ENCODE measurements at regions of chr20 and their contacts with region 1.

Region 1: GRCh38 chr20:35277531-35278395 is at the start of gene MMP24OS:
- DNase-seq: peak; percentile 89 to 93
- ATAC-seq: peak; percentile 91 to 97 (median 96)
- H3K4me3 ChIP-seq: peak within 1 kb of the TSS; percentile 56 to 89 (median 80)
- H3K27ac ChIP-seq: peak within 1 kb of the TSS; percentile 96 to 99 (median 98)
- H3K4me1 ChIP-seq: peaks cover 3 to 41% (median 16%) of the 10 kb centered on the region in 9 donors
- H3K27me3 ChIP-seq: no peaks in the 10 kb centered on the region
- CTCF ChIP-seq: peak in 5 of 9 donors; percentile 20 to 49 (median 40)
- total RNA-seq, gene MMP24OS: 36.8 to 62.4 (median 46.1) TPM

Region 2: DNA sequence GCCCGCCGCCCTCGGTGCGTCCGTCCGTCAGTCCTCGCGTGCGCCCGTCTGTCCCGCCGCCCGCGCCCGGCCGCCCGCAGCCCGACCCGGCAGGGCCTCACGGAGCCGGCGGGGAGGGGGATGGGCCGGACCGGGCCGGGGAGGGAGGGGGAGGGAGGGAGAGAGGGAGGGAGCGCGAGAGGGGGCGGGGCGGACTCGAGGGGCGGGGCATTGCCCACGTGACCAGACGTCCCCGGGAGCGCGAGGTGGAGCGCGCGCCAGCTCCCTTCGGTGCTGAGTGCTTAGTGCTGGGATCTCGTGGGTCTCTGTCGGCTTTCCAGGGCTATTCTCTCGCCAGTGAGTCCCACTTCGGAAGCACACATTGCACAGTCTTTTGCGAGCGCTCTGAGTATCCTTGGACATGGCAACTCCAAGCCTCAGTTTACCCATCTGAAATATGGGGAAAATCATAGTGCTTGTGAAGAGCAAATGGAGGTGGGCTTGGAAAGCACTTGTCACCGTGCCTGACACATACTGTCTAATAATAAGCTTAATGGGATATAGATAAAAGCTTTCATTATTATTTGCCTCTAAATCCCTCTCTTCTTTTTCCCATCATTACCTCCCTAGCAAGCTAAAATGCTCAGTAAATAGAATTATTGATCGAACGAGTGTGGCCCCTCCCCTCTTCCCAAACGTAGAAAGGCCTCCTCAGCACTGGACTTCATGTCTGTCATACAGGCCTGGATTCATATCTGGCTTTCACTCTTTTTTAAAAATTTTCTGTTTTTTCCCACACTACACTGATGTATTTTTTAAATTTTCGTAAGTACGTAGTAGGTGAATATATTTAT is 452.0 kb before region 1 on chr20 and contains the start of gene NCOA6:
- intact Hi-C with region 1: loop called in 4 of 10 experiments (anchors 10 kb)
- DNase-seq: peak; percentile 87 to 92
- ATAC-seq: peak; percentile 89 to 94 (median 91)
- H3K4me3 ChIP-seq: peak within 1 kb of the TSS; percentile 67 to 98 (median 92)
- H3K27ac ChIP-seq: peak within 1 kb of the TSS; percentile 85 to 97 (median 93)
- H3K4me1 ChIP-seq: peaks cover 3 to 47% (median 28%) of the 10 kb centered on the region in 9 donors
- H3K27me3 ChIP-seq: no peaks in the 10 kb centered on the region
- CTCF ChIP-seq: no peak
- total RNA-seq, gene NCOA6: 15.5 to 19.7 (median 18.0) TPM

Region 3: GRCh38 chr20:34861386-34862084 is 416.2 kb before region 1 on chr20:
- intact Hi-C with region 1: loop called in 1 of 10 experiments (anchors 10 kb)
- DNase-seq: no peak
- ATAC-seq: no peak
- H3K4me3 ChIP-seq: no peak overlapping the region
- H3K27ac ChIP-seq: no peak overlapping the region
- H3K4me1 ChIP-seq: peaks cover 0 to 10% (median 0%) of the 10 kb centered on the region in 9 donors
- H3K27me3 ChIP-seq: no peaks in the 10 kb centered on the region
- CTCF ChIP-seq: no peak

Region 4: DNA sequence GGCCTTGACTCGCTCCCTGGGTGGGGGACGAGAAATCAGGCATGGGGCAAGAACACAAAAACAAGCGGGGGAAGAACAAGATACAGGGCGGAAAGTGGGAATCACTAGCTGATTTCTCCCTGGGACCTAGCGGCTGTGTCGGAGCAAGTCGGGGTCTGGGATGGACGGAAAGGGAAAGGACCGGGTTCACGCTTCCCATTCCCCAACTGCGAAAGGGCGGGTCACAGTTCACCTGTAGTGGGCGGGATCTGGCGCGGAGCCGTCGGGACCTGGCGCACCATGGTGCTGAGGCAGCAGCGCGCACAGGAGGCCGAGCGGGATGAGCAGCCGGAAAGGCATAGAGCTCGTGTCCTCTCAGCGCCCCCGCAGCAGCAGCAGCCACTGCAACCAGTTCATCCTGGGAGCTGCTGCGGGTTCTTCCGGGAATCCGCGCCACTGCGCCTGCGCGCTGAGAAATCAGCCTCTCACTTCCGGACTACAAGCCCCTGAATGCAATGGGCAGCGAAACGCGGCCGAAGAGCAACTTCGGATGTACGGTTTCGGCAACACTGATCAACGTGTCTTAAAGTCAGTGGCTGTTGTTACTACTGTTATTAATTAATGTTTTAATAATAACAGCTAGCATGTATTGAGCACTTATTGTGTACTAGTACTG is 130.7 kb before region 1 on chr20 and contains the start of gene EDEM2:
- intact Hi-C with region 1: loop called in 2 of 10 experiments (anchors 5 to 10 kb)
- DNase-seq: peak; percentile 94 to 97
- ATAC-seq: peak; percentile 95 to 98 (median 96)
- H3K4me3 ChIP-seq: peak within 1 kb of the TSS; percentile 65 to 98 (median 86)
- H3K27ac ChIP-seq: peak within 1 kb of the TSS in 9 of 10 donors; percentile 74 to 88 (median 79)
- H3K4me1 ChIP-seq: peaks cover 6 to 44% (median 27%) of the 10 kb centered on the region in 9 donors
- H3K27me3 ChIP-seq: no peaks in the 10 kb centered on the region
- CTCF ChIP-seq: peak in 1 of 9 donors; percentile 7
- total RNA-seq, gene EDEM2: 7.2 to 26.1 (median 11.0) TPM